PC-9 (cell line): ENCODE measurements at regions of chr7 and their contacts with region 1.

Region 1: DNA sequence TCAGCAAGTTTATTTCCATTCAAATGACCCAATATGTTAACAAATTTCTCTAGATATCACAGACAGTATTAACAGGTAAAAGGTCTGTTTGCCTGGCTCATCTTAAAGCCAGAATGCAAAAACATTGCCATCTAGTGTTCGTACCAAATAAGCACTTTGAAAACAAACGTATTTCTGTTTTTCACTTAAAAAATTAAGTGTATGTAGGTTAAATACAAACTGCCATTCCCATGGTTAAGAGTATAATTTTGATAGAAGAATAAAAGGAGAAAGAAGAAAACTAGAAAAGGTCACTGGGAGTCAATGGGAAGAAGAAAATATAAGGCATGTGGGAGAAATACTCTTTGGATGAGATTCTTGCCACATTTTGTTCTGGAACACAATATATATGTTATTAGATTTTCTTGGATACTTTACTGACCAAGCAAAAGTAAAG is 51.0 kb downstream of the ORC5 start:
- DNase-seq: no peak
- H3K4me3 ChIP-seq: no peak overlapping the region
- H3K27ac ChIP-seq: no peak overlapping the region
- H3K4me1 ChIP-seq: no peaks in the 10 kb centered on the region
- H3K27me3 ChIP-seq: no peaks in the 10 kb centered on the region
- CTCF ChIP-seq: peak; percentile 76

Region 2: DNA sequence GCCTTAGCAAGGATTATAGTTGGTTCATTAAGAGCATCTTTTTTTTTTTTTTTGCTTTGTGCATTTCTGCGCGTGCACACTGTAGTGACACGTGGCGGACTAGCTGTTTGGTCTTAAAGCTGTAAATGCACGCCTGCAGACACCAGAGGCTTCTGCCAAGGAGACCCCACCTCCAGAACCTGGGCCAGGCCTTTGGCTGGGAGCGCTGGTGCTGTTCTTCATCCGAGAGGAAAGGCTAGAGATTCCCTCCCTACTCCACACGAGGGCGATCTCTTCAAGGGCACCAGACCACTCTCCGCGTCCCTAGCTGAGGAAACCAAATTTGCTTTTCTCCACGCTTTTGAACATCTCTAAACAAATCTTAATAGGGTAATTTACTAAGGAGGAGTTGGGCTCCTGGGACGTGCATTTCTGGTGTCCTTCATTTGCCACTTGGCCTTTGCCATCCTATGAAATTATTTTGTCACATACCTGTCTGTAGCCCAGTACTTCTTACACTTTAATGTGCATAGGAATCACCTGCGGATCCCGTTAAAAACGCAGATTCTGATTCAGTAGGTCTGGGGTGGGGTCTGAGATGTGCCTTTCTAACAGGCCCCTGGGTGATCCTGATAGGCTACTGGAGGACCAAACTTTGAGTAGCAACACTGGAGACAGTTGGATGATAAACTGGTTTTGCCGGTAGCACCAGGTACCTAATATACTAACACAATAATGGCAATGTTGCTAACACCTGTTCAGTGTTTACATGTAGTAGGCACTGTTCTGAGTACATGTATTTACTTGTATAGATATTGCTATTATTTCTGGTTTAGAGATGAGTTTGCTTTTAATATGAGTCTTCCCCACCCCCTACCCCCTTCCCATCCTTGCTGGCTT is 709.5 kb before region 1 on chr7:
- CTCF ChIA-PET with region 1: interaction called, 8 read pairs
- POLR2A ChIA-PET with region 1: no interaction called
- intact Hi-C with region 1: loop called (anchors 5 kb)
- DNase-seq: peak in 1 of 2 experiments; percentile 46
- H3K4me3 ChIP-seq: no peak overlapping the region
- H3K27ac ChIP-seq: no peak overlapping the region
- H3K4me1 ChIP-seq: no peaks in the 10 kb centered on the region
- H3K27me3 ChIP-seq: peaks cover 61% of the 10 kb centered on the region
- CTCF ChIP-seq: peak; percentile 71

Region 3: GRCh38 chr7:103573479-103574058 is 583.3 kb before region 1 on chr7:
- CTCF ChIA-PET with region 1: interaction called, 3 read pairs
- POLR2A ChIA-PET with region 1: no interaction called
- intact Hi-C with region 1: loop called (anchors 2 kb)
- DNase-seq: peak in 1 of 2 experiments; percentile 38
- H3K4me3 ChIP-seq: no peak overlapping the region
- H3K27ac ChIP-seq: no peak overlapping the region
- H3K4me1 ChIP-seq: no peaks in the 10 kb centered on the region
- H3K27me3 ChIP-seq: 0 out of 2 replicates have a peak, but pooled peaks cover 5% of the 10 kb centered on the region
- CTCF ChIP-seq: peak; percentile 83